Adrenal gland (tissue), 19 donors: ENCODE measurements at regions of chr9 and their contacts with region 1.

Region 1: DNA sequence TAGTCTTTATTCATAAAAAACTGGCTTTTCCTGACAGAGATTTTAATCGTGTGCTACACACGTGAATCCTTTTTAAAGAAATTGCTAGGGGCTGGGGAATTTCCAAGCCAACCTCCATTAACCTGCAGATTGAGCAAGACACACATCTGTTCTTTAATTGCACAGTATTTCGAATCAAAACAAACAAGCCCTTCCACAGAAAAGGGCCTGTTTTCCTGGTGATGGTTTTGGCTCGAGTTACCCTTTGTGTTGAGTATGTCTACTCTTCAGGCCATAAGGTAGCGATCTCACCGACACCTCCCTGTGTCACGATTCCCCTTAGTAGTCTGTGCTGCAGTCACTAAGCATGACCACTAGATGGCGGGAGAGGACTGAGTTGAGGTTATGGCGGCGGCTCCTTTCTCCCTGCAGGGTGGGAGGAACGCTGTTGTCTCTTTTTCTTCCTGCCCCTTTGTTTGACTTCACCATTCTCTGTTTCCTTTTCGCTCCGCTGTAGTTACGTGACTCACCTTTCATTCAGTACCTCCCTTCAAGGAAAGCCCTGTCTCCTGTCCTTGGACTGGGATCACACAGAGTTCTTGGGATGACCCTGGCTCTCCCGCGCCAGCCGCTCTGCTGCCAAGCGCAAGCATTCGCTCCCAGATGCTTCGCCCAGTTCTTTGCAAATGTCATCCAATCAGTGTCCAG is 137.1 kb upstream of the SLC24A2 start:
- DNase-seq: peak; percentile 70 to 88 (median 80)
- H3K4me3 ChIP-seq: peak overlapping the region in 1 of 4 donors; percentile 53
- H3K27ac ChIP-seq: peak overlapping the region in 2 of 5 donors; percentile 24 to 43
- H3K4me1 ChIP-seq: peaks cover 5% of the 10 kb centered on the region in 2 donors
- H3K27me3 ChIP-seq: no peaks in the 10 kb centered on the region
- CTCF ChIP-seq: peak; percentile 90 to 98 (median 96)
- POLR2A ChIP-seq: no peak

Region 2: DNA sequence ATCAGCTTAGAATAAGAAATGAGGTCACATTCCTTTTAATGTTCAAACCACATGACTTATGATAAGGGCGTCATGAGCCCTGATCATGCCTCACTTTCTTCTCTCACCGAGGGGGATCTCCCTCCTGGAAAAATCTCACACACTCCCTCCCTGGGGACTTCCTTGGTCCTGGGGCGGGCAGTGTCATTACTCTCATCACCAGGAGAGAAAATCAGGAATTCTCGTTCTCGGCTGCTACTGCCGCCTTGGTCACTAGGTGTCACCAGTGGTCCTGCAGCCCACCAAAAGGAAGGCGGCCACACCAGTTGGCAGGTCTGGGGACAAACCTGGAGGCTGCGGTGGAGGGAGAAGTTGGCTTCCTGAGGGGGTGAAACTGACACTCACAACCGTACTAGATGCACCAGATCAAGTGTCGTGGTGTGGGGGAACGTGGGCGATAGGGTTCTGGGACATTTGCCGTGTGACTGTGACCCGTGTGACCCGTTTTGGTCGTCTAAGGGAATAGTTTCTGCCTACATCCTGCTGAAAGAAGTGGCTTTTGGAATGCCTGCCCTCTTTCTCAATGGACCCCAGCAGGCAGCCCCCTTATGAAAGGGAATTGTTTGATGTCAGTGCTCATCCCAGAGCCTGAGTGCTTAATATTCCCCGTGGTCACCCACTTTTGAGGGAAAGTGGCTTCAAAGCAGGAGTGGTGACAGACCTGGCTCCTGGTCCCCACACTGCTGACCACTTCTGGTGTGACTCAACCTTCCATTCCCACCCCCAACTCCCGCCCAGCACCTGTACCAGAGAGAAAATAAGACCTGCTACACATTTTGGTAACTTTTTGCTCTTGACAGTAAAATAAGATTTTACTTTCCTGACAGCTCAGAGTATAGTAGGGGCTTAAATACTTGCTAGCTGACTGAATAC is 454.0 kb before region 1 on chr9:
- intact Hi-C with region 1: loop called (anchors 5 to 10 kb)
- DNase-seq: peak; percentile 44 to 87 (median 69)
- H3K4me3 ChIP-seq: peak overlapping the region in 1 of 4 donors; percentile 26
- H3K27ac ChIP-seq: no peak overlapping the region
- H3K4me1 ChIP-seq: peaks cover 0 to 4% of the 10 kb centered on the region in 2 donors
- H3K27me3 ChIP-seq: no peaks in the 10 kb centered on the region
- CTCF ChIP-seq: peak; percentile 52 to 78 (median 74)
- POLR2A ChIP-seq: no peak

Region 3: GRCh38 chr9:19875291-19875920 is 50.6 kb before region 1 on chr9:
- intact Hi-C with region 1: no loop called
- DNase-seq: no peak
- H3K4me3 ChIP-seq: no peak overlapping the region
- H3K27ac ChIP-seq: no peak overlapping the region
- H3K4me1 ChIP-seq: no peaks in the 10 kb centered on the region
- H3K27me3 ChIP-seq: no peaks in the 10 kb centered on the region
- CTCF ChIP-seq: no peak
- POLR2A ChIP-seq: no peak

Region 4: DNA sequence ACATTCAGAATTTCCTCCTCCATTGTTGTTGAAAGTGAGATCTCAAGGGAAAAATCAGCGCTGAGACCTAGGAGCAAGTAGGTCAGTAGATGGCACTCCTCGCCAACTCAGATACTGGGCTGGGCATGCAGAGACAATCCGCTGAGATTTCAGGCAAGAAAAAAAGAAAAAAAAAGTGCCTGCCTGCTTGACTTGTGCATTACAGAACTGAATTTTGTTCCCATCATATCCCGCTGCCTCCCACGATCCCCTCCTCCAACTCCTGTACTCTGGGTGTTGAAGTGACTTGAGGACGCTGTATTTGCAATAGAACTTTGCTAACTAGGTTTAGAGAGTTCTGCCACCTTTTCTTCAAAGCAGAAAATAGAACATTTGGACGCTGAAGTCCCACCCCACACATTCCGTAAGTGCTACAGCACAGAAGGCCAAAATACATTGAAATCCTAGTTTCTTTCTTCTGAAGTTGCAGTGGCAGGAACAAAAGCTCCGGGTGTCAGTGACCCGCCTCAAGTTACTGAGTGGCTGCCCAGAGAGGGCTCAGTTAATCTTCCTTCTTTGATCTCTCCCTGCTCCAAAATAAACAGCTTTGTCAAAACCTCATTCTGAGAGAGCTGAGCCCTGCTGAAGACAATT is 430.6 kb after region 1 on chr9:
- intact Hi-C with region 1: loop called in 1 of 2 experiments (anchors 10 kb)
- DNase-seq: peak; percentile 73 to 92 (median 84)
- H3K4me3 ChIP-seq: peak overlapping the region in 1 of 4 donors; percentile 45
- H3K27ac ChIP-seq: peak overlapping the region in 4 of 5 donors; percentile 35 to 64 (median 57)
- H3K4me1 ChIP-seq: peaks cover 10 to 28% of the 10 kb centered on the region in 2 donors
- H3K27me3 ChIP-seq: no peaks in the 10 kb centered on the region
- CTCF ChIP-seq: peak; percentile 29 to 86 (median 72)
- POLR2A ChIP-seq: peak in 1 of 2 donors; percentile 6